ENCODE measurements at regions of chr10 and their contacts with region 1.

Region 1: DNA sequence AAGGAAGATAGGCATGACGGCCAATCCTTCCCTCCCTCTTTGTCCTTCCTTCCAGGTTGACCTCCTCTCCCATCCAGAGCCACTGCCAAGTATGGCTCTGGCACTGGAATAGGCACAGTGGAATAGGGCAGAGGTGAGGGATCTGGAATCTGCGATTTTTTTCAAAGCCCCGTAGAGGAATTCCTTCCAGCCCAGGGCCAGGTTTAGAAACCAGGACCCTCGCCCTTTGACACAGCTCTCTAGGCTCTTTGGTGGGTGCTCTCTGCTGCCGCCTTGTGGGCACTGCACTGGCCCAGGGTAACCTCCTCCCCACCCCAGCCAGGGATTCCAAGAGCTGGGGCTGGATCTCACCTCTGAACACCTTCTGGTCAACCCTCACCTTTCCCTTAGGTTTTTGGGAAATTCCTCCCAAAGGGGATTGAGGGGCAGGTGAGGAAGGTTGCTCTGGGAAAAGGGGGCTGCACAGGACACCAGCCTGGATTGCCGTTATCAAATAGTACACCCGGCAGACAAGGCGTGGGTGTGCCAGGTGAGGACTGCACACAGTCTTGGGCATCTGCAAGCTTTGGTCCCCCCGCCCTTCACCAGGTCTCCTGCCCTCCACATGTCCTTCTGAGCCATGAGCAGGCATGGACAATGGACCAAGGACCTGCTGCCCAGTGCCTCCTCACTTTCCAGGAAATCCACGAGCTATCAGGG is 22.8 kb downstream of the C10orf105 start:
- DNase-seq: peak; percentile 77 to 85
- H3K4me3 ChIP-seq: no peak overlapping the region
- H3K4me3 Mint-ChIP-seq: no peak overlapping the region
- H3K27ac Mint-ChIP-seq: no peak overlapping the region
- H3K4me1 ChIP-seq: no peaks in the 10 kb centered on the region
- H3K4me1 Mint-ChIP-seq: no peaks in the 10 kb centered on the region
- H3K27me3 ChIP-seq: no peaks in the 10 kb centered on the region
- H3K27me3 Mint-ChIP-seq: peaks cover 4% of the 10 kb centered on the region
- CTCF ChIP-seq: peak; percentile 97 to 99

Region 2: DNA sequence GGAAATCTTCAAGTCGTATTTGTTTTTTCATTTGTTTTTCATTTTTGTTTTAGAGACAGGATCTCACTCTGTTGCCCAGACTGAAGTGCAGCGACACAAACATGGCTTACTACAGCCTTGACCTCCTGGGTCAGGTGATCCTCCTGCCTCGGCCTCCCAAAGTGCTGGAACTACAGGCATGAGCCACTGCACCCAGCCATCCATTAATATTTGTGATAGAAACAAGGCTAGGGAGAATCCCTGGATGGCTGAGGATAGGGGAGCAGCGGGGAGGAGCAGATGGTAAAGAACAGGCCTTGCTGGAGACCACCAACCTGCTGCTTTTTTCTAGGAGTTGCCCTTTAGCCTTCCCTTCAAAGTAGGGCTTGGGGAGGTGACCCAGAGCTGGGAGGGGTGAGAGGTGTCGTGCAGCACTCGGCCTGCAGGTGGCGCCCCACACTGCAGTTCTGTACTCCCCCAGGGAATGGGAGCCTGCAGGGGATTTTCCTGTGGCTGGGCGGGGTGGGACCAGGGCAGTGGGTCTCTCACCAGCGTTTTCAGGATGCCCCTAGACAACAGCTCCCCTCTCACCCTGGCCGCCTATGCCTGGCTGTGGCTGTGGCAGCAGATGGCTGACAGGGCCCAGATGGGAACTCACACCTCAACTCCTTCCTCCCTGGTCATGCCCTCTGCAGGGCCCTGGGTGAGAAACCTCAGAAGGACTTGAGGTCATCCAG is 312.6 kb before region 1 on chr10:
- CTCF ChIA-PET with region 1: interaction called, 7 read pairs
- POLR2A ChIA-PET with region 1: no interaction called
- intact Hi-C with region 1: loop called (anchors 1 kb)
- DNase-seq: peak; percentile 80 to 89
- H3K4me3 ChIP-seq: no peak overlapping the region
- H3K4me3 Mint-ChIP-seq: no peak overlapping the region
- H3K27ac Mint-ChIP-seq: no peak overlapping the region
- H3K4me1 ChIP-seq: no peaks in the 10 kb centered on the region
- H3K4me1 Mint-ChIP-seq: no peaks in the 10 kb centered on the region
- H3K27me3 ChIP-seq: no peaks in the 10 kb centered on the region
- H3K27me3 Mint-ChIP-seq: peaks cover 6% of the 10 kb centered on the region
- CTCF ChIP-seq: peak; percentile 97 to 98

Region 3: DNA sequence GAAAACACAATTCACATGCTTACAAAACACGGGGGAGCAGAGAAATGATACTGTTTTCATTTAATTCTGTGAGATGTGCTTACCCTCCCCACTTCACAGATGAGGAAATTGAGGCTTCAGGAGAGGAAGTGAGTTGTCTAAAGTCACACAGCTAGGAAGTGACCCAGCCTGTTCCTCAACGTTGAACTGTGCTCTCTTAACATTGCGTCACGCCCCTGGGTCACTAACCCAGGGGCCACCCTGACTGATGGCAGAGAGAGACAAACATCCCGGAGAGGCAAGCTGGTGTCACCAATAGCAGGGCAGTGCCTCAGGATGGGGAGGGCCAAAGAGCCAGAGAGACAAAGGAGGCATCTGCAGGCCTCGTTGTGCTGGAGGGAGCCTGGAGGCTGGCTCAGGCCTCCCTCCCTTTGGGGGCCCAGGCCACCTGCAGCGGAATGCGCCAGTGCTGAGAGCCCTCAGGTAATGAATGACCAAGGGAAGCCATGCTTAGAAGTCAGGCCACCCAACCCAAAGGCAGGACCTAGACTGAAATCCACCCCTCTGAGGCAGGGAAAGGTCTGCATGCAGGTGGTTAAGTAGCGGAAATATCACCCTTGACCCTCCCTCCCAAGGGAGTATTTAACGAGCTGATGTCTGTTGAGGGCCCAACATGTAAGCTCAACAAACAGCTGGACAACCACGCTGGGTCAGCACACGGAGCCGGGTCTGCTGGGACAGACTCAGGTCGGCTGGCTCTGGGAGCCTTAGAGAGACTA is 58.5 kb before region 1 on chr10:
- CTCF ChIA-PET with region 1: interaction called, 26 read pairs
- POLR2A ChIA-PET with region 1: no interaction called
- intact Hi-C with region 1: no loop called
- DNase-seq: peak; percentile 93 to 98
- H3K4me3 ChIP-seq: peak overlapping the region; percentile 2
- H3K4me3 Mint-ChIP-seq: peak overlapping the region; percentile 65
- H3K27ac Mint-ChIP-seq: peak overlapping the region; percentile 93
- H3K4me1 ChIP-seq: peaks cover 71% of the 10 kb centered on the region
- H3K4me1 Mint-ChIP-seq: peaks cover 54% of the 10 kb centered on the region
- H3K27me3 ChIP-seq: no peaks in the 10 kb centered on the region
- H3K27me3 Mint-ChIP-seq: no peaks in the 10 kb centered on the region
- CTCF ChIP-seq: no peak

Region 4: DNA sequence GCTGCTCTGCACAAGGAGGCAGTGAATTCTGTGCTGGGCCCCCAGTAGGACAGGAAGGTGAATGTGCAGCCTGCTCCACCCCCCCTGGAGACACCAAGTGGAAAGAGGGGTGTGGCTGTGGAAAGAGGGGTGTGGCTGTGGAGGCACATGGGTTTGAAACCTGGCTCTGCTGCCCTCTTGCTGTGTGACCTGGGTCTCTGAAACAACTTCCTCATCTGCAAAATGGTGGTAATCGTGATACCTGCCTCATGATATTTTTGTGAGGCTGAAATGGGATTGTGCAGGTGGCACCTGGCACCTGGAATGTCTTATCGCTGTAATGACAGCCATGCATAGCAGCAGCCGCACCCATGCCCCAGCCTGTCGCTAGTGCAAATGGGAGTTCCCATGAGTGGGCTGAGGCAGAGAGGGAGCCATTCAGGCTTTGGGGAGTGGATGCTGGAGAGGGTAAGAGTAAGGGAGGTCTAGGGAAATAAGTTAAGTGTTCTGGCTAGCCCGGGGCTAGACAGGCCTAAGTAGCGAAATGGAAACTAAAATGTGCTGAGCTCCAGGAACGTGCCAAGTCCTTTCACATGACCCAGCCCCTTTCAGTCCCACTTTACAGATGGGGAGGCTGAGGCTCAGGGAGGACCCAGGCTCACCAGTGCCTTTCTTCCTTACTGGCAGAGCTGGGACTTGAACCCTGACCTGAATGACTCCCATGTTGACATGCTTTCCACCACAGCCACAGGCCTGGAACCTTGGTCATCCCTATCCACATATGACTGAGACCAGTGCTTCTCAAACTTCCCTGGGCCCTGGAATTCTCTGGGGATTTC is 12.2 kb before region 1 on chr10:
- CTCF ChIA-PET with region 1: interaction called, 10 read pairs
- POLR2A ChIA-PET with region 1: no interaction called
- intact Hi-C with region 1: no loop called
- DNase-seq: peak; percentile 54 to 73
- H3K4me3 ChIP-seq: no peak overlapping the region
- H3K4me3 Mint-ChIP-seq: no peak overlapping the region
- H3K27ac Mint-ChIP-seq: no peak overlapping the region
- H3K4me1 ChIP-seq: no peaks in the 10 kb centered on the region
- H3K4me1 Mint-ChIP-seq: no peaks in the 10 kb centered on the region
- H3K27me3 ChIP-seq: no peaks in the 10 kb centered on the region
- H3K27me3 Mint-ChIP-seq: peaks cover 9% of the 10 kb centered on the region
- CTCF ChIP-seq: no peak

Region 5: DNA sequence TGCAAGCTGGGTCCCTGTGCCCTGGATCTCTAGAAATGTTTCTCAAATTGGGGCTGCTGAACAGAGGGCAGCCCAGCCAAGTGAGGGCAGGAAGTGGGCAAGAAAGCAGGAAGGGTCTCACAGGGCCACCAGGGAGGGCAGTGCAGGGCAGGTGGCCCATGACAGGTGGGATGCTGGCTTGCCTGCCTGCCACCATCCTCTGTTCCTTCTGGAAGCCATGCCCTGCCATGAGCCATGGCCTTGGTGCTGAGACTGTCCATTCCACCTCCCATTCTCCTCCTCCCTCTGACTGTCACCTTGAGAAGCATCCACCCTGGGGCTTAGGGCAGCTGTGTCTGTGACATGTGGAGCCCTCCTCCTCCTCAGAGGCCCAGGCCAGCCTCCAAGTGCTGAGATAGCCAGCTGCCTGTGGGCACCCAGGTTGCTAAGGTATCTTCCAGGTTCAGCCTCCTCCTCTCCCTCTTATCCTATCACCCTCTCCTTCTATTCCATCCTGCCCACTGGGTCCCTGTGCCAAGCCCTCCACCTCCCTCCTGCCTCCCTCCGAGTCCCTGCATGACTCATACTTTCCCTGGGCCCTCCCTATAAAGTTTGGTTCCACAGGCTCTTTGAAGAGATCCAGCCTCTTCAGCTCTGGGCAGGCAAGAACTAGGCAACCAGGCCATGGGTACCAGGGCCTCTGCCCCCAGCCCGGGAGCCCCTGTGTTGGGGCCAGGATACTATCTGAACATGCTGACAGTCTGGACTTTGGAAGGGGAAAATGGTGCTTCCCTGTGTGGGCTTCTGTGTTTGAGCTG is 75.2 kb after region 1 on chr10:
- CTCF ChIA-PET with region 1: interaction called, 22 read pairs
- POLR2A ChIA-PET with region 1: no interaction called
- intact Hi-C with region 1: no loop called
- DNase-seq: no peak
- H3K4me3 ChIP-seq: peak overlapping the region; percentile 56; the same call in 1 of the 2 replicates
- H3K4me3 Mint-ChIP-seq: peak overlapping the region; percentile 70
- H3K27ac Mint-ChIP-seq: peak overlapping the region; percentile 1
- H3K4me1 ChIP-seq: peaks cover 65% of the 10 kb centered on the region
- H3K4me1 Mint-ChIP-seq: peaks cover 27% of the 10 kb centered on the region
- H3K27me3 ChIP-seq: no peaks in the 10 kb centered on the region
- H3K27me3 Mint-ChIP-seq: no peaks in the 10 kb centered on the region
- CTCF ChIP-seq: no peak

Region 6: DNA sequence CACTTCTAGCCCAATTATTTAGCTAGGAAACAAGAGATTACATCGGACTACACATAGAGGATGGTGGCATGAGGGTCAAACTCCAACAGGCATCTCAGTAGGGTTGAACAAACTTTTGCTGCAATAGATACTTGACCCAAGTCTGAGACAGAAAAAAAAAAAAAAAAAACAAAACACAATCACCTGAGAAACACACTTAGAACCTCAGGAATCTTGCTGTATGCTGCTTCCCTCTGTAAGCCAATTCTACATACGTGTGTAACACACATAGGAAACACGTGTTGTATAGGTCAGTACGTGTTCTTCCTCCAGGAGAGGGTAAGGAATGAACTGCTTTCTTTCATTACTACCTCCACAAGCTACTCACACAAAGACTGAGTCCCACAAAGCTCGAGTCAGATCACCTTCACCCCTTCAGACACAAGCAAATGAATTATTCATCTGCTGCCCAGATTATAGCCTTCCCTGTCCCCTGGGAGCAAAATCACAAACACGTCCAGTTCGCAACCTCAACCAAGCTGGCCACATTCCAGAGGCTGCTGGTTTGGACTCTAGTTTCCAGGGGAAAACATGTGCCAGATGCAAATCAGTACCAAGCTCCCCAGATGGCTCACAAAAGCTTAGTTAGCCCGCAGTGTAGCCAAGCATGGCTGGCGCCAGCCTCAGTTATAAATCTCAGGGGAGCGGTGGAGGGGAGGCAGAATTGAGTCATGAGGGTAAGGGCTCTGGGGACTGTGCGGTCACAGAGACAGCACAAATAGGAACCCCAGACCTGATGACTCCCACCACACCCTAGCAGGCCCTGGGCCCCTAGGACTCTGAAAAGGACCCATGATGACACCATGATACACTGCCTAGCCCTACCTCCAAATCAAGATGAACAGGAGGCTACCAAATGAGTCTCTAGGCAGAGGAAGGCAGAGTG is 139.2 kb after region 1 on chr10:
- CTCF ChIA-PET with region 1: no interaction called
- POLR2A ChIA-PET with region 1: no interaction called
- intact Hi-C with region 1: no loop called
- DNase-seq: no peak
- H3K4me3 ChIP-seq: no peak overlapping the region
- H3K4me3 Mint-ChIP-seq: no peak overlapping the region
- H3K27ac Mint-ChIP-seq: peak overlapping the region; percentile 46
- H3K4me1 ChIP-seq: peaks cover 56% of the 10 kb centered on the region
- H3K4me1 Mint-ChIP-seq: peaks cover 48% of the 10 kb centered on the region
- H3K27me3 ChIP-seq: no peaks in the 10 kb centered on the region
- H3K27me3 Mint-ChIP-seq: no peaks in the 10 kb centered on the region
- CTCF ChIP-seq: no peak

Region 7: GRCh38 chr10:71860243-71861029 is 163.7 kb after region 1 on chr10:
- CTCF ChIA-PET with region 1: no interaction called
- POLR2A ChIA-PET with region 1: no interaction called
- intact Hi-C with region 1: no loop called
- DNase-seq: peak; percentile 87 to 90
- H3K4me3 ChIP-seq: no peak overlapping the region
- H3K4me3 Mint-ChIP-seq: no peak overlapping the region
- H3K27ac Mint-ChIP-seq: peak overlapping the region; percentile 91
- H3K4me1 ChIP-seq: peaks cover 11% of the 10 kb centered on the region
- H3K4me1 Mint-ChIP-seq: peaks cover 6% of the 10 kb centered on the region
- H3K27me3 ChIP-seq: no peaks in the 10 kb centered on the region
- H3K27me3 Mint-ChIP-seq: no peaks in the 10 kb centered on the region
- CTCF ChIP-seq: no peak